ENCODE measurements at regions of chr6 and their contacts with region 1.

Region 1: DNA sequence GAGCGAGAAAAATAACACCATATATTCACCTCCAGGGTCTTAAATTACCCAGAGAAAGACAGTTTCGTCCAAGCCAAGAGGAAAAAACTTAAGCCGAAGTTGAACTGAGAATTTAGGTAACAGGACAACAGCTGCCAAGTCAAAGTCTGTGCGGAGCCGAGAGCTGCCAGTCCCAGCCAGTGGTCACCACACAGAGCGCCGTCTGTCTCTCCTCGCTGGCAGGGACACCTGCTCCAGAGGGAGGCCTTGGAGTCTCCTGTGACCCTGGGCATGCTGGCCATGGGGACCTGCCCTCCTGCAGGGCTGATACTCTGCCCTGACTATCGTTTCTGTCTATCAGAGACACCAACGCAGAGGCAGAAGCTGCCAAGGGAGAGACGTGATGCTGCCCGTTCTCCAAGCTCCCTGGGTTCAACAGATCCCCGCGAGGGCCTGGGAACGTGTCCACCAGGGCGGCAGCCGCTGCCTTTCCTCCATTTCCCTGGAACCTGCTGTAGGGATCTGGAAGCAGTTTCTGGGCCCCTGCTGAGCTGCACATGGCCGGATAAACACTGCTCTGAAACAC is 341.3 kb downstream of the SMOC2 start:
- DNase-seq: no peak
- H3K4me3 ChIP-seq: no peak overlapping the region
- CTCF ChIP-seq: no peak
- POLR2A ChIP-seq: no peak

Region 2: DNA sequence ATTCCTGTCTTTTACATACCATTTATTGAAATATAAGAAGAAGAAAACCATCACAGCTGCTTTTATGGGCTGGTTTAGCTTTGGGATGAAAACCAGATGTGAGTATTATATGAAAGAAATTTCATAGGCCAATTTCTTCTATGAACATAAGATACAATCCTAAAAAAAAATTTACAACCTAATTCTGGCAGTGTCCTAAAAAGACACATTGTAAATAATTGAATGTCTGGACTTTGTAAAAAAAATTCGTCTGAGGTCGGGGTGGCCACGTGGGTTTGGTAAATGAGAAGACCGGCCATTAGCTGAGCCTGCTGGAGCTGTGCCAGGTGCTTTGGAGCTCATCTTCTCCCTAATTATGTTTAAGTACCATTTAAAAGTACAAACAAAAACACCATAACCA is 489.4 kb before region 1 on chr6:
- intact Hi-C with region 1: no loop called
- DNase-seq: peak in 1 of 2 donors; percentile 69
- H3K4me3 ChIP-seq: no peak overlapping the region
- CTCF ChIP-seq: no peak
- POLR2A ChIP-seq: no peak

Region 3: DNA sequence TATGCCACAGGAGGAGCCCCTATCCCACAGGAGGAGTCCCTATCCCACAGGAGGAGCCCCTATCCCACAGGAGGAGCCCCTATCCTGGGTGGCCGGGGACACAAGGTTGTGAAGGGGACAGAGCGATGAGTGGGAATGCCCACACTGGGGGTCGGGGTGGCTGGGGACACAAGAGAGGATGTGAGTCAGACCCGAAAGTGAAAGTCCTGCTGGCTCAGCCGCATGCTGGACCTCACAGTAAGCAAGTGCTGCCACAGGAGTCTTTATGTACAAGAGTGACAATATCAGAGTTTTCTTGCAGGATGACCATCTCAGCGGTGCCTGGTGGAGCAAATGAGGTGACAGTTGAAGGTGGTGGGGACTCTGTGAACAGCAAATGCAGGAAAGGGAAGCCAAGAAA is 1677.2 kb after region 1 on chr6:
- intact Hi-C with region 1: no loop called
- DNase-seq: peak in 1 of 2 donors; percentile 85
- H3K4me3 ChIP-seq: no peak overlapping the region
- CTCF ChIP-seq: no peak
- POLR2A ChIP-seq: no peak

Region 4: DNA sequence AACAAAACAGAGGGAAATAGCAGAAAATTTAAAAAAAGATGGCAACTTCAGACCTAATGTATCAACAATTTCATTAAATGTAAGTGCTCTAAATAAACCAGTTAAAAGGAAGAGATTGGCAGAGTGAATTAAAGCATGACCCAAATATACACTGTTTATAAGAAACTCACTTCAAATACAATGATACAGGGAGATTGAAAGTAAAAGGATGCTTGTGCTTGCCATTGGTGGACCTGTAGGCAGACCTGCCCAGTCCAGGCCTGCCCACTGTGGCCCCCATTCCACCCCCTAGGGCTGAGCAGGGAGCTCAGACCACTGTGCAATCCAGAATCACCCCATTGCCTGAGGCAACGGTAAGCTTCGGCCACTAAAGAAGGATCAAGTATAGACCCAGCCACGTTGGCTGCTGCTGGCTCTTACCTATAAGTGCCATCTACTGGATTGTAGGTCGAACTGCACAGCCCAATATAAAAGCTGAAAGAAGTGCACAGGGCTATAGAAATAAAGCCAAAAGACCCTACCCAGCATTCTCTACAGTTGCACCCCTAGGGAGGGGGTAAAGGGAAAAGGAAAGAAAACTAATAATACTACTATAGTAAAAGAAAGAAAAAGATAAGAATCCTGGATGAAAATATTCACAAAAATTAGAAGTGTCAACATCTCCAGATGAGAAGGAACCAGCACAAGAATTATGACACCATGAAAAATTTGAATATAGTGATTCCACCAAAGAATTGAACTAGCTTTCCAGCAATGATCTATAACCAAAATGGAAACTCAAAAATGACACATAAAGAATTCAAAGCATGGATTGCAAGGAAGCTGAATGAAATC is 1734.7 kb after region 1 on chr6:
- intact Hi-C with region 1: loop called (anchors 5 kb)
- DNase-seq: peak in 1 of 2 donors; percentile 20
- H3K4me3 ChIP-seq: no peak overlapping the region
- CTCF ChIP-seq: peak in 1 of 3 donors; percentile 50
- POLR2A ChIP-seq: no peak